CD14-positive monocyte (primary cell): ENCODE measurements at regions of chr11 and their contacts with region 1.

Region 1: DNA sequence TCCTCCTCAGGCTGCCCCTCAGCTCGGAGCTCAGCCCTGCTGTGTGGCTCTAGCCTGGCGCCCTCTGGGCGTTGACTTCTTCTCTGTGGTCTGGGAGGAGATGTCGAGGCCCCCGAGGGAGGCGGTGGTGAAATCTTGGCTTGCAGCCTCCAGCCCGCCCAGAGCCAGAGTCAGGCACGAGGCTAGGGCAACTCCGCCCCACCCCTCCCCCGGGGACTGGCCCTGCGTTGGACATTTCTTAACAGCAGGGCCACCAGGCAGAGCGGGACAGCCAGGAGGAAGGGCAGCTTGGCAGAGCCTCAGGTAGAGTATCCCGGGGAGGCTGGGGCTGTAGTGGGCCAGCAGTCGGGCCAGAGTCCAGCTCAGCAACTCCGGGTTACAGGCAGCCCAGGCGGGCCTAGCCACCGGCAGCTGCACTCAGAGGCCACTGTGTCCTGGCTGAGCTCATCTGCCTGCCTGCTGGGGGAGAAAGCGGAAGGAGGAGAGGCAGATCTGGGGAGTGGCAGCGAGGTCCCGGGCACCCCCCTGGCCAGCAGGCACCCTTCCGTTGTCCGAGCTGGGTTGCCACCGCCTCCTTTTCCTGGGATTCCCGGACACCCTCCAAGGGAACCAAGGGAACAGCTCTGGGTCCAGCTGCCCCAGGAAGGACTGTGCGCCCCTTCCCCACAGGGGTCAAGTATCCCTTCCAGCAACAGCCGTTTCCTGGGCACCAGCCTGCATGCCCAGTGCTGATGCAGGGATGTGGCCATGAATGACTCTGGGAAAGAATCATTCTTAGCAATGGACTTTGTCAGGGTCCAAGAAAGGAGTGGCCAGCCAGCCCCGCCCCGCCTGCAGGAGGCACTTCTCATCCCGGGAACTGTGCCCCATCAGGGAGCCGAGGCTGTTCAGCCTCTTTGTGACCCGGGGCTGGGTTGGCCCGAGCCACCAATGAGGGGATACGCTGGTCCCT is at the start of gene ALDH3B1:
- DNase-seq: peak; percentile 83 to 90 (median 87)
- H3K4me3 ChIP-seq: peak within 1 kb of the TSS; percentile 52 to 89 (median 60)
- H3K4me3 Mint-ChIP-seq: peak within 1 kb of the TSS; percentile 83 to 92
- H3K27ac ChIP-seq: peak within 1 kb of the TSS; percentile 90 to 94
- H3K27ac Mint-ChIP-seq: peak within 1 kb of the TSS; percentile 91 to 97 (median 95)
- H3K4me1 ChIP-seq: peaks cover 76 to 85% of the 10 kb centered on the region in 2 donors
- H3K4me1 Mint-ChIP-seq: peaks cover 74% of the 10 kb centered on the region
- H3K27me3 ChIP-seq: no peaks in the 10 kb centered on the region
- H3K27me3 Mint-ChIP-seq: peaks cover 0 to 1% (median 0%) of the 10 kb centered on the region in 3 donors
- CTCF ChIP-seq: no peak
- polyA plus RNA-seq, gene ALDH3B1: 79.8 to 89.1 (median 86.7) TPM

Region 2: DNA sequence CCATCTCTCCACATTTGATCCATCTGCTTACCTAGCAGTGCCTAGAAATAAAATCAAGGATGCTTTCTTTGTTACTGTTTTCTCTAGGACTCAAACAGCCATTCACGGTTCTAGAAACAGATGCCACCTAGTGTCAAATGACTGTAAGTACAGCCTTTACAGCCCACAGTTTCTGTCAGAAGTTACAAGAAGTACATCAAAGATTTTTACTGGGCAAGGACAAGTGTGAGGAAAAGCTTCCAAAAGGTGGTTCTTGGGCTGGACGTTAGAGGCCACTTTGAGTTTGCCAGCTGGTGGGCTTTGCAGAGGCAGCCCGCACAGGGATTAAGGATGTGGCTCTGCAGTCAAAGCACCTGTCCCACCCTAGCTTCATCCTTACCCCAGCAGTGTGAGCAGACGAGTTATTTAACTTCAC is 195.8 kb after region 1 on chr11:
- intact Hi-C with region 1: loop called (anchors 5 to 10 kb)
- DNase-seq: peak; percentile 41 to 62 (median 58)
- H3K4me3 ChIP-seq: no peak overlapping the region
- H3K4me3 Mint-ChIP-seq: no peak overlapping the region
- H3K27ac ChIP-seq: no peak overlapping the region
- H3K27ac Mint-ChIP-seq: peak overlapping the region in 3 of 7 donors; percentile 35 to 88 (median 54)
- H3K4me1 ChIP-seq: peaks cover 31 to 38% of the 10 kb centered on the region in 2 donors
- H3K4me1 Mint-ChIP-seq: peaks cover 54% of the 10 kb centered on the region
- H3K27me3 ChIP-seq: no peaks in the 10 kb centered on the region
- H3K27me3 Mint-ChIP-seq: peaks cover 0 to 1% (median 1%) of the 10 kb centered on the region in 3 donors
- CTCF ChIP-seq: peak; percentile 82